HepG2 (cell line): ENCODE measurements at regions of chr2 and their contacts with region 1.

Region 1: DNA sequence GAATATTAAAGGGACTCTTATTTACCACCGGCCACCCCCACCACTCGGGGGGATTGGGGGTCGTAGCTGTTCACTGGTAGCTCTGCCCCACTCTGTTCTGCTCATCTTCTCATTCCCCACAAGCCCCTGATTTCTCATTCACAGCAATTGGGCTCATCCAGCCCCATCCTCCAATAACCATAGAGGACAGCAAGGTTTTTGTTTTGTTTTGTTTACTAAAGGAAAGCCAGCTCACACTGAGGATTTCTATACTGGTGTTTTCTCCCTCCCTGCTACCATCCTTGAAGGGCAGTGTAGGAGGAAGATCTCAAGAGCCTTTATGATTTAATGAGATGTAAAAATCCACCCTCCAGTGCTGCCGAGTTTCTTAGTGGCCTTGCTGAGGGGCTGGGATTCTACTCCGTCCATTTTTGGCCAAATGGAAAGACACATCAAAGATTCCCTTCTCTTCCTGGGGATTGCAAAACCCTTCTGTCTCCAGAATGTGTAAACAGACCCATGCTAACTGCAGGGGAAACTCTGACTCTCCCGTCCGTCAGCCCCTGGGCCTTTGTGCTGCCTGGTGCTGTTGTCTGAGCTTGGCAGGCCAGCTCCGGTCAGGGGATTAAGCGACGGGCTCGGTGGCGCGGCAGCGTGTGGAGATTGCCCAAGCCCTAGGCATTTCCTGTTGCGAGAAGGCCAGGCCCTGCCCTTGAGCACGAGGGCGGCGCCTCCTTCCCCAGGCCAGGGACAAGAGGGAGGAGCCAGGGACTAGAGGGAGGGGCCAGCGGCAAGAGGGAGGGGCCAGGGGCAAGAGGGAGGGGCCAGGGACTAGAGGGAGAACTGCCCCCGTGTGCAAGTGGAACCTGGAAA is 165.0 kb downstream of the ANTXR1 start:
- DNase-seq: peak; percentile 99
- ATAC-seq: peak; percentile 97
- H3K4me3 ChIP-seq: peak overlapping the region; percentile 2 to 36 (median 4); a peak in 4 of 6 replicates
- H3K27ac ChIP-seq: peak overlapping the region; percentile 94
- H3K4me1 ChIP-seq: peaks cover 68% of the 10 kb centered on the region
- H3K27me3 ChIP-seq: no peaks in the 10 kb centered on the region
- CTCF ChIP-seq: peak; percentile 57
- EP300 ChIP-seq: peak; percentile 86 to 97
- POLR2A ChIP-seq: peak; percentile 82 to 85
- RAD21 ChIP-seq: peak; percentile 78

Region 2: GRCh38 chr2:68980956-68981355 is 197.1 kb before region 1 on chr2:
- CTCF ChIA-PET with region 1: no interaction called
- POLR2A ChIA-PET with region 1: no interaction called
- in situ Hi-C with region 1: no loop called
- intact Hi-C with region 1: no loop called
- DNase-seq: no peak
- ATAC-seq: no peak
- H3K4me3 ChIP-seq: no peak overlapping the region
- H3K27ac ChIP-seq: no peak overlapping the region
- H3K4me1 ChIP-seq: no peaks in the 10 kb centered on the region
- H3K27me3 ChIP-seq: peaks cover 0 to 16% of the 10 kb centered on the region in 2 experiments; a peak in 1 of 5 replicates
- CTCF ChIP-seq: no peak
- EP300 ChIP-seq: no peak
- POLR2A ChIP-seq: no peak
- RAD21 ChIP-seq: no peak

Region 3: GRCh38 chr2:69188182-69188900 is 10.3 kb after region 1 on chr2:
- CTCF ChIA-PET with region 1: no interaction called
- POLR2A ChIA-PET with region 1: interaction called, 13 read pairs
- in situ Hi-C with region 1: no loop called
- intact Hi-C with region 1: no loop called
- DNase-seq: no peak
- ATAC-seq: no peak
- H3K4me3 ChIP-seq: no peak overlapping the region
- H3K27ac ChIP-seq: no peak overlapping the region
- H3K4me1 ChIP-seq: peaks cover 15% of the 10 kb centered on the region; the same call in 1 of the 2 replicates
- H3K27me3 ChIP-seq: no peaks in the 10 kb centered on the region
- CTCF ChIP-seq: no peak
- EP300 ChIP-seq: no peak
- POLR2A ChIP-seq: no peak
- RAD21 ChIP-seq: no peak

Region 4: GRCh38 chr2:69214898-69215297 is 36.9 kb after region 1 on chr2:
- CTCF ChIA-PET with region 1: no interaction called
- POLR2A ChIA-PET with region 1: interaction called, 18 read pairs
- in situ Hi-C with region 1: no loop called
- intact Hi-C with region 1: loop called (anchors 1 kb)
- DNase-seq: peak; percentile 46
- ATAC-seq: no peak
- H3K4me3 ChIP-seq: no peak overlapping the region
- H3K27ac ChIP-seq: peak overlapping the region; percentile 87
- H3K4me1 ChIP-seq: peaks cover 74% of the 10 kb centered on the region
- H3K27me3 ChIP-seq: no peaks in the 10 kb centered on the region
- CTCF ChIP-seq: no peak
- EP300 ChIP-seq: no peak
- POLR2A ChIP-seq: no peak
- RAD21 ChIP-seq: no peak

Region 5: GRCh38 chr2:69386789-69387734 is 209.1 kb after region 1 on chr2 and contains the start of gene GFPT1:
- CTCF ChIA-PET with region 1: no interaction called
- POLR2A ChIA-PET with region 1: no interaction called
- in situ Hi-C with region 1: no loop called
- intact Hi-C with region 1: loop called (anchors 10 kb)
- DNase-seq: peak; percentile 90
- ATAC-seq: peak; percentile 93
- H3K4me3 ChIP-seq: peak within 1 kb of the TSS; percentile 79 to 99 (median 93)
- H3K27ac ChIP-seq: peak within 1 kb of the TSS; percentile 80
- H3K4me1 ChIP-seq: peaks cover 54% of the 10 kb centered on the region
- H3K27me3 ChIP-seq: no peaks in the 10 kb centered on the region; a peak in 1 of 5 replicates
- CTCF ChIP-seq: peak; percentile 19
- EP300 ChIP-seq: peak in 1 of 2 experiments; percentile 59; a peak in 1 of 4 replicates
- POLR2A ChIP-seq: peak; percentile 84 to 98
- RAD21 ChIP-seq: peak; percentile 68
- total RNA-seq, gene GFPT1: 84.9 and 129 TPM in 2 replicates

Region 6: DNA sequence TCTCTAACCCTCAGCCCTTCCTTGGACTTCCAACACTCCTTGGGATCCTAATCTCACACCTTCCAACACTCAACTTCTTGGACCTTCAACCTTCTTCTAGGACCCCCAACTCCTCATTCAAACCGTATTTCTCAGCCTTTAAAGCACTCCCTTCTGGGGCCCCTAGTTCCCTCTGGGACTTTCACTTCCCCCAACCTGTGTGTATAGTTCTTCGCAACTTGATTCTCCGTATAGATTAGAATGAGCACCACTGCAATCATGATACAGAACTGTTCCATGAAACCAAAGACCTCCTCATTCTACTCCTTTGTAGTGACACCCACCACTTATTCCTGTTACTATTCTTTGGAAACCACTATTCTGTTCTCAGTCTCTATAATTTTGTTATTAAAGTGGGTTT is 321.2 kb after region 1 on chr2:
- CTCF ChIA-PET with region 1: no interaction called
- POLR2A ChIA-PET with region 1: no interaction called
- in situ Hi-C with region 1: no loop called
- intact Hi-C with region 1: no loop called
- DNase-seq: no peak
- ATAC-seq: no peak
- H3K4me3 ChIP-seq: no peak overlapping the region
- H3K27ac ChIP-seq: no peak overlapping the region
- H3K4me1 ChIP-seq: peaks cover 29% of the 10 kb centered on the region
- H3K27me3 ChIP-seq: no peaks in the 10 kb centered on the region
- CTCF ChIP-seq: no peak
- EP300 ChIP-seq: no peak
- POLR2A ChIP-seq: no peak
- RAD21 ChIP-seq: no peak